Spleen (tissue), 13 donors: ENCODE measurements at regions of chr10 and their contacts with region 1.

Region 1: GRCh38 chr10:22003079-22003913 is at the start of gene DNAJC1:
- DNase-seq: peak; percentile 99
- H3K4me3 ChIP-seq: peak within 1 kb of the TSS; percentile 66 to 96 (median 94)
- H3K27ac ChIP-seq: peak within 1 kb of the TSS; percentile 89 to 97 (median 94)
- H3K4me1 ChIP-seq: peaks cover 9 to 56% (median 32%) of the 10 kb centered on the region in 6 donors
- H3K27me3 ChIP-seq: no peaks in the 10 kb centered on the region
- CTCF ChIP-seq: peak in 5 of 11 experiments; percentile 19 to 38 (median 26)
- POLR2A ChIP-seq: peak in 2 of 3 donors; percentile 38 to 78
- total RNA-seq, gene DNAJC1: 20.3 to 96.4 (median 26.4) TPM

Region 2: DNA sequence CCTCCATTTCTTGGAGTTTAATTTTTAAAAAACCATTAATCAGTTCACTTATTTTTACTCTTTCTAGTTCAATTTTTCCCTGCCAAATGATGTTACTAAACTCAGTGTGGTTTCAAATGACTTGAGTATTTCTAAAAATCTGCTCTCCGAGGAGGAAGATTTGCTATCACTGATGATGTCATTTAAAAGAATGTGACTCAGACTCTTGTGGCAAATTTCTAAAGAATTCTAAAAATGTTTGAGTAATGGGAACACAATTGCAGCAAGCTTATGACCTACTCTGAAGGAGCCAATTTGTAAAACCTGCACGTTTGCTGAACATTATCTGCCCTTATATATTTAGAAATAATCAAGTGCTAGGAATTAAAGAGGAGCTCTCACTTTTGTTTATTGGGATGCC is 430.6 kb after region 1 on chr10:
- intact Hi-C with region 1: loop called (anchors 5 kb)
- DNase-seq: no peak
- H3K4me3 ChIP-seq: no peak overlapping the region
- H3K27ac ChIP-seq: no peak overlapping the region
- H3K4me1 ChIP-seq: peaks cover 5 to 35% (median 18%) of the 10 kb centered on the region in 6 donors
- H3K27me3 ChIP-seq: peaks cover 0 to 13% (median 0%) of the 10 kb centered on the region in 7 donors
- CTCF ChIP-seq: no peak
- POLR2A ChIP-seq: no peak

Region 3: GRCh38 chr10:22573820-22574569 is 570.7 kb after region 1 on chr10:
- intact Hi-C with region 1: loop called (anchors 10 kb)
- DNase-seq: no peak
- H3K4me3 ChIP-seq: no peak overlapping the region
- H3K27ac ChIP-seq: peak overlapping the region in 5 of 8 donors; percentile 1 to 58 (median 45)
- H3K4me1 ChIP-seq: peaks cover 0 to 62% (median 13%) of the 10 kb centered on the region in 6 donors
- H3K27me3 ChIP-seq: no peaks in the 10 kb centered on the region
- CTCF ChIP-seq: peak in 8 of 11 experiments; percentile 17 to 54 (median 46)
- POLR2A ChIP-seq: no peak

Region 4: GRCh38 chr10:22988581-22989360 is 985.5 kb after region 1 on chr10:
- intact Hi-C with region 1: loop called (anchors 5 kb)
- DNase-seq: no peak
- H3K4me3 ChIP-seq: no peak overlapping the region
- H3K27ac ChIP-seq: no peak overlapping the region
- H3K4me1 ChIP-seq: peaks cover 0 to 24% (median 12%) of the 10 kb centered on the region in 6 donors
- H3K27me3 ChIP-seq: no peaks in the 10 kb centered on the region
- CTCF ChIP-seq: peak; percentile 74 to 95 (median 88)
- POLR2A ChIP-seq: no peak